ENCODE measurements at regions of chr18 and their contacts with region 1.

Region 1: DNA sequence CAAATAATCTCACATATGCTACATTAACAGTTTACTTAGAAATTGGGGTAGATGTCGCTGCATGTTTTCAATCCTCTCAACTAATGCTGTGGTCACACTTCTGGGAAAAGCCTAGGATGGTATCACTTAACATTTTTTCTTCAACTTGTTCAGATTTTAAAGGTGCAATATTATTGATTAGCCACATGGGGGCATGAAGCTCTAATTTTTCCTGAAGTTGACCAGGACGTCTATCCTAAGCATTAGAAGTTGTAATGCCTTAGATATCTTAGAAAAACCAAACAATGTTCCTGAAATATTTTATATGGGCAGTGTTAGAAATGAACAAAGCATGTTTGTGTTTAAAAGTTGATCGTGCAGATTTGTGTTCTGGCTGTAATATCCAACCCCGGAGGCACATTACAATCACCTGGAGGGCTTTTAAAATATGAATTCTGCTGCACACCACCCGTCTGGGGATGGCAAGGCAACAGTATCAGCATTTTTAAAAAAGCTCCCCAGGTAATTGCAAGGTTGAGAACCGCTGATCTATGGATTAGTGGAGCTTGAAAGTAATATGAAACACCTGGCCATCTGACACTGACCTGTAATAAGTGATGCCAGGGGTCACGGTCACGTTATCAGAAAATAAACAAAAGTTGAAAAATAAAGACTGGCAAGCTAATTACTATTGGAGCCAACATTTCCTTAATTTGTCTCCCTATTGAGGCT is 100.5 kb upstream of the LMAN1 start:
- DNase-seq: peak; percentile 51
- H3K4me3 Mint-ChIP-seq: no peak overlapping the region
- H3K27ac Mint-ChIP-seq: no peak overlapping the region
- H3K4me1 Mint-ChIP-seq: peaks cover 5% of the 10 kb centered on the region
- H3K27me3 Mint-ChIP-seq: no peaks in the 10 kb centered on the region
- CTCF ChIP-seq: peak; percentile 54

Region 2: DNA sequence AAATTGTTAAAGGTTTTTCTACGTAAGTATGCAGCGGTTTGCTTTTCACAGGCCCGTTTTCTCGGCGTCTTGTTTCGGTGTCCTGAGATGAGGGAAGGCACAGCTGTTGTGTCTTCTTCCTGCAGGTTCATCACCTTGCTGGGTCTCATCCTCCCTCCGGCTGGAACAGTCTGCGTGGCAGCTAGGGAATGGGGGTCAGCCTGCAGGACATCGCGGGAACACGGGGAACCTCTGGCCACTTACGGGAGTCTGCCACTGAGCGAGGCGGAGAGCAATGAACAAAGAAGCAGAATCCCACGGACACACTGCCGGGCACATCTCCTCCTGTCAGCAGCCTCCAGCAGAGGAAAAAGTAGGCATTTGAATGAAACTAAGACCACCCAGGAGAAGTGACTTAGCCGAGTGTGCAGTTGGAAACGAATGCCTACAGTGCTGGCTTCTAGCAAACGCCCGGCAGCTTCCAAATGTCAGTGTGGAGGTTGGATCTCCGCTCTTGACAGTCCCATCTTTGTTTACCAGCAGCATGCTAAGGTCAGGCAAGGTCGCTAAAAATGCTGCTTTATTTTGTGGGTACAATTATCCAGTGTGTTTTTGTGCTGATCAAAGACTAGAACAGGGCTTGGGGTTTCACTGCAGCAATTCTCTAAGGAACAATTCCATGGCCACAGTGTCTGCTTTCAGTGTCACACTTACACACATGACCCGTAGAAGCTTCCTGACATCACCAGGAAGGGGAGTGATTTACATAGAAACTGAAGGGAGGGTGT is 429.7 kb before region 1 on chr18:
- CTCF ChIA-PET with region 1: no interaction called
- POLR2A ChIA-PET with region 1: no interaction called
- intact Hi-C with region 1: no loop called
- DNase-seq: no peak
- H3K4me3 Mint-ChIP-seq: no peak overlapping the region
- H3K27ac Mint-ChIP-seq: no peak overlapping the region
- H3K4me1 Mint-ChIP-seq: no peaks in the 10 kb centered on the region
- H3K27me3 Mint-ChIP-seq: no peaks in the 10 kb centered on the region
- CTCF ChIP-seq: no peak

Region 3: GRCh38 chr18:59414111-59414653 is 45.3 kb before region 1 on chr18:
- CTCF ChIA-PET with region 1: no interaction called
- POLR2A ChIA-PET with region 1: no interaction called
- intact Hi-C with region 1: no loop called
- DNase-seq: no peak
- H3K4me3 Mint-ChIP-seq: no peak overlapping the region
- H3K27ac Mint-ChIP-seq: no peak overlapping the region
- H3K4me1 Mint-ChIP-seq: no peaks in the 10 kb centered on the region
- H3K27me3 Mint-ChIP-seq: peaks cover 42% of the 10 kb centered on the region
- CTCF ChIP-seq: no peak

Region 4: DNA sequence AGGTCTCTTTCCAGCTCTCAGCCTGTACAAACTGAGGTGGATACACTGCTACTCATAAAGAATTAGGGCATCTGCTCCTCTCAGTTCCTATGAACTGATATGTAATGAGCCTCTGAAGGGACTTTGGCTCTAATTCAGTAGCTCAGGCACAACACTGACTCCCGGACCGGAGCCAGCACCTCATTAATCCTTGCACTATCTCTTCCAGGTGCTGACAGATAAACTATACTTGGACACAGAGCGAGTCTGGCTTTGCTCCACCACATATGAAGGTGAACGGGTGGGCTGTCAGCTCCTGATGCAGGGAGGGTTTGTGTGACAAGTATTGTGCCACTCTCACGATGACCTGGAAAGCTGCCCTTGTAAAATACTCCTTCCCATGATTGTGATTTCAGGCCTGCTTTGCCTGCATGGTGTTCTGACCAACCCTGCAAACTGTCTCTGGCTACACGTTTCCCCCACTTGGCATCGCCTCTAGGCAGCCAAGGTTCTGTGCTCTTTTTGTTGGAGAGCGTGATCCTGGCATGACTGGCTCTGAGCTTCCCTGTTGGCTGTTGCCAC is 11.1 kb after region 1 on chr18:
- CTCF ChIA-PET with region 1: interaction called, 40 read pairs
- POLR2A ChIA-PET with region 1: no interaction called
- intact Hi-C with region 1: no loop called
- DNase-seq: no peak
- H3K4me3 Mint-ChIP-seq: no peak overlapping the region
- H3K27ac Mint-ChIP-seq: no peak overlapping the region
- H3K4me1 Mint-ChIP-seq: no peaks in the 10 kb centered on the region
- H3K27me3 Mint-ChIP-seq: no peaks in the 10 kb centered on the region
- CTCF ChIP-seq: no peak

Region 5: GRCh38 chr18:59514203-59514602 is 54.7 kb after region 1 on chr18:
- CTCF ChIA-PET with region 1: interaction called, 10 read pairs
- POLR2A ChIA-PET with region 1: interaction called, 3 read pairs
- intact Hi-C with region 1: no loop called
- DNase-seq: no peak
- H3K4me3 Mint-ChIP-seq: no peak overlapping the region
- H3K27ac Mint-ChIP-seq: peak overlapping the region; percentile 42
- H3K4me1 Mint-ChIP-seq: peaks cover 21% of the 10 kb centered on the region
- H3K27me3 Mint-ChIP-seq: no peaks in the 10 kb centered on the region
- CTCF ChIP-seq: no peak

Region 6: GRCh38 chr18:59617468-59617932 is 158.0 kb after region 1 on chr18:
- CTCF ChIA-PET with region 1: interaction called, 21 read pairs
- POLR2A ChIA-PET with region 1: no interaction called
- intact Hi-C with region 1: no loop called
- DNase-seq: peak; percentile 77
- H3K4me3 Mint-ChIP-seq: no peak overlapping the region
- H3K27ac Mint-ChIP-seq: no peak overlapping the region
- H3K4me1 Mint-ChIP-seq: peaks cover 46% of the 10 kb centered on the region
- H3K27me3 Mint-ChIP-seq: no peaks in the 10 kb centered on the region
- CTCF ChIP-seq: no peak

Region 7: DNA sequence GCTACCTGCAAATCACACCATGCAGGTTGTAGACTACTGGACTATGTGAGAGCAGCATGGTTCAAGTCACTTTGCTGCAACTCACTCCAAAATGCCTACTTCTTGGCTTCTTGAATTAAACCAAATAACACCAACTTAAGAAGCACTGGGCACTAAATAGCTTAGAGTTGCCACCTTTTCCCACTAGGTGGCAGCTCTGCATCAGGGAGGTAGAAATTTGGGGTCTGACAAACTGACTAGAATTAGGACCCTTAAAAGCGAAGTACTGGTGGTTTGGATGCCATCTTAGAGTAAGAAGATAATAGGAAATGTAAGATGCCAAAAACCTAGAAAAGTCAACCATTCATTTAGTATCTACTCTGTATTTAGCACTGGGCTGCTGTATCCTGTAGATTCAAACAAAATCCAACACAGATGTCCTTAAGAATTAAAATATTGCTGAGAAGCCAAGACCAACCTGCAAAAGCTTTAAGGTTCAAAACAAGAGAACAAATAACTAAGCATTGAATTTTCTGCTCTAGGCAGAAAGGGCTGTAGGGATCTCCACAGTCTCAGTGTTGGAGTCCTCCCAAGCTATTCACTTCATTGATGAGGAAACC is 172.2 kb after region 1 on chr18:
- CTCF ChIA-PET with region 1: interaction called, 78 read pairs
- POLR2A ChIA-PET with region 1: interaction called, 9 read pairs
- intact Hi-C with region 1: loop called (anchors 2 kb)
- DNase-seq: peak; percentile 48
- H3K4me3 Mint-ChIP-seq: no peak overlapping the region
- H3K27ac Mint-ChIP-seq: no peak overlapping the region
- H3K4me1 Mint-ChIP-seq: no peaks in the 10 kb centered on the region
- H3K27me3 Mint-ChIP-seq: peaks cover 14% of the 10 kb centered on the region
- CTCF ChIP-seq: peak; percentile 78

Region 8: DNA sequence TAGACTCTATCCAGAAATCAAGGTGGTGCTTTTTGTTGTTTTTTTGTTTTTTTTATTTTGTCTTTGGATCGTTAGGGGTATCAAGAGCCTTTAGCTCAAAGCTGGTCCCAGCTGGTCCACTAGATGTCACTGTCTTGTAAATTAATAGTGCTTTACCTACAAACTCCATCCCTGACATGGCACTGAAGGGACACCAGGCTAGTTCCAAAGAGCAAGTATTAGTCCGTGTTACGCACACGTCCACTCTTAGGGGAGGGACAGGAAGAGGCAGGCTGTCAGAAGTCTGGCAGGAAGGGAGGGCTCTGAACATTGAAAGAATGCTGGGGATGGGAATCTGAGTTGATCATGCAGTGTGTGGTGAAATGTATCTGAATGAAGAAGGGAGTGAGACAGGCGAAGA is 323.6 kb after region 1 on chr18:
- CTCF ChIA-PET with region 1: interaction called, 26 read pairs
- POLR2A ChIA-PET with region 1: interaction called, 3 read pairs
- intact Hi-C with region 1: loop called (anchors 1 kb)
- DNase-seq: peak; percentile 70
- H3K4me3 Mint-ChIP-seq: no peak overlapping the region
- H3K27ac Mint-ChIP-seq: peak overlapping the region; percentile 0
- H3K4me1 Mint-ChIP-seq: peaks cover 40% of the 10 kb centered on the region
- H3K27me3 Mint-ChIP-seq: no peaks in the 10 kb centered on the region
- CTCF ChIP-seq: peak; percentile 51

Region 9: DNA sequence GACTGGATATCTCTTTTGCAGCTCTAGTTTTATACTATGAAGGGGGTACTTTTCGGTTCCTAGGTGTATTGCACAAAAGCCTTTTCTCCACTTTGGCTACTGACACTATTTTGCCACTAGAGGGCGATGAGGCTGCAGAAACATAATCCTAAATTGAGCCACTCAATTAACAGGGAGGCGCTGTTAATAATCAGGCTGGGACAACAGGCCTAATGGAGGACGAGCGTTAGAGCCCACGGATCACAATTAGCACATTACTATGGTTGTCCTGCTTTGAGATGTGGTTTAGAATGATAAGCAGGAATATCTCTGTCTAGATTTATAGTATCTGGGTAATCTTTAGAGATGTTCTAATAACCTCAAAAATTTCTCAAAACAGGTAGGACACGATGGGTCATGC is 378.1 kb after region 1 on chr18:
- CTCF ChIA-PET with region 1: interaction called, 10 read pairs
- POLR2A ChIA-PET with region 1: no interaction called
- intact Hi-C with region 1: no loop called
- DNase-seq: peak; percentile 82
- H3K4me3 Mint-ChIP-seq: no peak overlapping the region
- H3K27ac Mint-ChIP-seq: no peak overlapping the region
- H3K4me1 Mint-ChIP-seq: peaks cover 1% of the 10 kb centered on the region
- H3K27me3 Mint-ChIP-seq: no peaks in the 10 kb centered on the region
- CTCF ChIP-seq: peak; percentile 83

Measured in MCF 10A (cell line).